Aorta (tissue), 5 donors: ENCODE measurements at regions of chr17 and their contacts with region 1.

Region 1: GRCh38 chr17:75827252-75828115 is 16.7 kb downstream of the UNC13D start:
- DNase-seq: peak; percentile 75 to 88
- ATAC-seq: peak; percentile 71
- H3K4me3 ChIP-seq: no peak overlapping the region
- H3K27ac ChIP-seq: peak overlapping the region in 1 of 2 donors; percentile 61
- H3K4me1 ChIP-seq: no peaks in the 10 kb centered on the region
- H3K27me3 ChIP-seq: no peaks in the 10 kb centered on the region

Region 2: GRCh38 chr17:75784473-75785015 is 42.9 kb before region 1 on chr17 and contains the start of gene UNK:
- intact Hi-C with region 1: loop called in 1 of 2 experiments (anchors 5 kb)
- DNase-seq: peak; percentile 98 to 99
- ATAC-seq: peak; percentile 96
- H3K4me3 ChIP-seq: peak within 1 kb of the TSS; percentile 48 to 63
- H3K27ac ChIP-seq: peak within 1 kb of the TSS; percentile 83 to 99
- H3K4me1 ChIP-seq: no peaks in the 10 kb centered on the region
- H3K27me3 ChIP-seq: peaks cover 0 to under 1% of the 10 kb centered on the region in 2 donors
- total RNA-seq, gene UNK: 28.9 to 34.1 TPM